K562 (cell line): ENCODE measurements at regions of chr15 and their contacts with region 1.

Region 1: GRCh38 chr15:78437762-78438302 is at the start of gene IREB2:
- DNase-seq: peak; percentile 96 to 99 (median 96)
- ATAC-seq: peak; percentile 94
- H3K4me3 ChIP-seq: peak within 1 kb of the TSS; percentile 99
- H3K27ac ChIP-seq: peak within 1 kb of the TSS; percentile 96
- H3K4me1 ChIP-seq: peaks cover 4 to 6% of the 10 kb centered on the region in 2 experiments; a peak in 4 of 5 replicates
- H3K27me3 ChIP-seq: no peaks in the 10 kb centered on the region
- CTCF ChIP-seq: peak in 1 of 3 experiments; percentile 36; a peak in 2 of 6 replicates
- EP300 ChIP-seq: no peak
- POLR2A ChIP-seq: peak; percentile 92
- RAD21 ChIP-seq: no peak
- polyA plus RNA-seq, gene IREB2: 18.0 to 21.4 TPM

Region 2: DNA sequence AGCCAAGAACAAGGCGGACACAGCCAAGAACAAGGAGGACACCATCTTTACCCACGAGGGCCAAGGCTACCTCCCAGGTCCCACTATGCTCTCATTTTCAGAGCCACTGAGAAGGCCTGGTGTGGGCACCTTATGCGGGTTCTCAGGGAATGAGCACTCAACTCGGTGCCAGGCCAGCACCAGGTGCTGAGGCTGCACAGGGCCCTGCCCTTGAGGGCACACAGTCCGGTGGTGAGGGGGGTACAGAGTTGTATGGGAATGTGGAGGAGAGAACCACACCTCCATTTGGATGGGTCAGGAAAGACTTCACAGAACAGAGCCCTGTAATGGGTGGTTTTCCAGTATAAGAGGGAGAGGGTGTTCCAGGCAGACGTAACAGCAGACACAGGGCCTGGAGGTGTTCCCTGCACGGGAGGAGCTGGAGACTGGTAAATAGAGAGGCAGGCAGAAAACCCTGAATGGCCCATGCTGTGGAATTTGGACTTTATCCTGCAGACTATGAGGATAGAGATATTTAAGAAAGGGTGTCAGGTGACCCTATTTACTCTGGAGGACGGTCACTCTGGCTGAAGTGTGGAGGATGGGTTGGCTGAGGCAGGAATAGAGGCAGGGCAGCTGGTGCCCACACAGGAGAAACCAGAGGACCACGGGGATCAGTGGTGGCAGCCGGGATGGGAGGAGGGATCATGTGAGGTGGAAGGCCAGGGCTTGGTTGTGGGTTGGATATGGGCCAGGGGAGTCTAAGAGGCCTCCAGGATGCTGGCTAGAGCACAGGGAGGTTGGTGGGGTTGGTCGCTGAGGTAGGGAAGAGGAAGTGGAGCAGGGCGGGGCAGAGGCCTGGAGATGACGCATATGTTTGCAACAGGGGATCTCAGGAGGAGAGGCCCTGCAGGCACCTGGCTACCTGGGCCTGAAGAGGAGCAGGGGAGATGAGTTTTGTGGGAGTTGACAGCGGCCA is 63.1 kb before region 1 on chr15:
- CTCF ChIA-PET with region 1: no interaction called
- POLR2A ChIA-PET with region 1: no interaction called
- in situ Hi-C with region 1: no loop called
- intact Hi-C with region 1: no loop called
- DNase-seq: peak in 2 of 4 experiments; percentile 27 to 41
- ATAC-seq: peak; percentile 95
- H3K4me3 ChIP-seq: no peak overlapping the region
- H3K27ac ChIP-seq: no peak overlapping the region
- H3K4me1 ChIP-seq: peaks cover 5% of the 10 kb centered on the region in 2 experiments; a peak in 3 of 5 replicates
- H3K27me3 ChIP-seq: peaks cover 4 to 12% of the 10 kb centered on the region in 2 experiments; a peak in 4 of 5 replicates
- CTCF ChIP-seq: no peak
- EP300 ChIP-seq: no peak
- POLR2A ChIP-seq: no peak
- RAD21 ChIP-seq: no peak

Region 3: DNA sequence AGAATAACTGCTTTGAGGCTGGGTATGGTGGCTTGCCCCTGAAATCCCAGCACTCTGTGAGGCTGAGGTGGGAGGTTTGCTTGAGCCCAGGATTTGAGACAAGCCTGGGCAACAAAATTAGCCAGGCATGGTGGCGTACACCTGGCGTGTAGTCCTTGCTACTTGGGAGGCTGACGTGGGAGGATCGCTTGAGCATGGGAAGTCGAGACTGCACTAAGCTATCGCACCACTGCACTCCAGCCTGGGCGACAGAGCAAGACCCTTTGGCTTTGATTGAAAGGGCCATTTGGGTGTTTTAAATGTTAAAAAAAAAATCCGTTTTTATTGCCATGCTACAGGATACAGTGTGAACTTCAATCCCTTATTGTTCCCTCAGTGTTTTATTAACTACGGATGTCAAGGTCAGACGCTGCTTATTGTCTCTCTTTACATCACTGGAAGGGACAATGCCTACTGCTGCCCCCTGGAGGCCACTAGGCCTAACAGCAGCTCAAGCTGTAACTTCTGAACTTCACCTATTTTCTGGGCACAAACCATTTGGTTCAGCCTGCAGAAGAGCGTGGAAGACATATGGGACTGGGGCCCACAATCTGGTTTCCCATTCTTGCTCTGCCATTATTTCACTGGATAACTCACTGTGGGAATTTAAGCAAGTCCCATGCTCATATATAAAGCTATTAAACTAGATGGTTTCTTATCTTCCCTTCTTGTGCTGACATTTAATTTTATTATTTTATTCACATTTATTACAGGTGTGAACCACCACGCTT is 15.1 kb before region 1 on chr15:
- CTCF ChIA-PET with region 1: no interaction called
- POLR2A ChIA-PET with region 1: interaction called, 17 read pairs
- in situ Hi-C with region 1: no loop called
- intact Hi-C with region 1: no loop called
- DNase-seq: peak; percentile 67 to 73 (median 71)
- ATAC-seq: peak; percentile 87
- H3K4me3 ChIP-seq: no peak overlapping the region
- H3K27ac ChIP-seq: no peak overlapping the region
- H3K4me1 ChIP-seq: no peaks in the 10 kb centered on the region; a peak in 2 of 5 replicates
- H3K27me3 ChIP-seq: no peaks in the 10 kb centered on the region
- CTCF ChIP-seq: peak; percentile 77 to 90 (median 86)
- EP300 ChIP-seq: no peak
- POLR2A ChIP-seq: no peak
- RAD21 ChIP-seq: peak; percentile 48 to 70

Region 4: GRCh38 chr15:78449220-78449999 is 11.6 kb after region 1 on chr15:
- CTCF ChIA-PET with region 1: no interaction called
- POLR2A ChIA-PET with region 1: interaction called, 14 read pairs
- in situ Hi-C with region 1: no loop called
- intact Hi-C with region 1: no loop called
- DNase-seq: no peak
- ATAC-seq: no peak
- H3K4me3 ChIP-seq: no peak overlapping the region
- H3K27ac ChIP-seq: no peak overlapping the region
- H3K4me1 ChIP-seq: peaks cover 0 to 9% of the 10 kb centered on the region in 2 experiments; a peak in 2 of 5 replicates
- H3K27me3 ChIP-seq: no peaks in the 10 kb centered on the region
- CTCF ChIP-seq: no peak
- EP300 ChIP-seq: no peak
- POLR2A ChIP-seq: no peak
- RAD21 ChIP-seq: no peak